HEK293 (cell line): ENCODE measurements at regions of chr9 and their contacts with region 1.

Region 1: GRCh38 chr9:112486221-112487007 is at the start of gene KIAA1958:
- H3K4me3 ChIP-seq: peak within 1 kb of the TSS; percentile 97
- H3K27ac ChIP-seq: peak within 1 kb of the TSS; percentile 82
- H3K4me1 ChIP-seq: peaks cover 11% of the 10 kb centered on the region; the same call in 1 of the 2 replicates
- CTCF ChIP-seq: 0 out of 2 replicates have a peak, but pooled peaks have one; percentile 8

Region 2: GRCh38 chr9:112271466-112272092 is 214.8 kb before region 1 on chr9:
- CTCF ChIA-PET with region 1: no interaction called
- POLR2A ChIA-PET with region 1: no interaction called
- H3K4me3 ChIP-seq: no peak overlapping the region
- H3K27ac ChIP-seq: no peak overlapping the region
- H3K4me1 ChIP-seq: no peaks in the 10 kb centered on the region
- CTCF ChIP-seq: no peak

Region 3: GRCh38 chr9:112505607-112506006 is 19.2 kb after region 1 on chr9:
- CTCF ChIA-PET with region 1: no interaction called
- POLR2A ChIA-PET with region 1: interaction called, 10 read pairs
- H3K4me3 ChIP-seq: no peak overlapping the region
- H3K27ac ChIP-seq: no peak overlapping the region
- H3K4me1 ChIP-seq: no peaks in the 10 kb centered on the region
- CTCF ChIP-seq: no peak